ENCODE measurements at regions of chr15 and their contacts with region 1.

Region 1: DNA sequence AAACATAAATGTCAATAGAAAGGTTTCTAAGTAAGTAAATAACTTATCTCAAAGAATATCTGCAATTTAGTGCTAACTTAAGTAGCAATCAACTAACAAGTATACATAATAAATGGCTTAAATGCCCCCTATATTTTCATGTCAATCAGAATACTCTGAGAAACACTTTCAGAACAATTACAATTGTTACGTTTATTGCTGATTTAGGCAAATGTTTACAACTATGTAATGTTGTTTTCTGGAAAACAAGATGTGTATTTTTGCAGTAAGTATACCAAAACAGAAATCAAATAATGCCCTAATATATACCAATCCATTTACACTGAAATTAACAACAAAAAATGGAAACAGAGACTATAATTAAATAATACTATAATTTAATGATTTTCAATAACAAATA is 13.2 kb downstream of the TUBGCP5 start:
- DNase-seq: no peak
- ATAC-seq: no peak
- H3K4me3 ChIP-seq: no peak overlapping the region
- H3K27ac ChIP-seq: no peak overlapping the region
- H3K4me1 ChIP-seq: no peaks in the 10 kb centered on the region
- H3K27me3 ChIP-seq: no peaks in the 10 kb centered on the region
- CTCF ChIP-seq: no peak
- POLR2A ChIP-seq: no peak
- RAD21 ChIP-seq: no peak

Region 2: DNA sequence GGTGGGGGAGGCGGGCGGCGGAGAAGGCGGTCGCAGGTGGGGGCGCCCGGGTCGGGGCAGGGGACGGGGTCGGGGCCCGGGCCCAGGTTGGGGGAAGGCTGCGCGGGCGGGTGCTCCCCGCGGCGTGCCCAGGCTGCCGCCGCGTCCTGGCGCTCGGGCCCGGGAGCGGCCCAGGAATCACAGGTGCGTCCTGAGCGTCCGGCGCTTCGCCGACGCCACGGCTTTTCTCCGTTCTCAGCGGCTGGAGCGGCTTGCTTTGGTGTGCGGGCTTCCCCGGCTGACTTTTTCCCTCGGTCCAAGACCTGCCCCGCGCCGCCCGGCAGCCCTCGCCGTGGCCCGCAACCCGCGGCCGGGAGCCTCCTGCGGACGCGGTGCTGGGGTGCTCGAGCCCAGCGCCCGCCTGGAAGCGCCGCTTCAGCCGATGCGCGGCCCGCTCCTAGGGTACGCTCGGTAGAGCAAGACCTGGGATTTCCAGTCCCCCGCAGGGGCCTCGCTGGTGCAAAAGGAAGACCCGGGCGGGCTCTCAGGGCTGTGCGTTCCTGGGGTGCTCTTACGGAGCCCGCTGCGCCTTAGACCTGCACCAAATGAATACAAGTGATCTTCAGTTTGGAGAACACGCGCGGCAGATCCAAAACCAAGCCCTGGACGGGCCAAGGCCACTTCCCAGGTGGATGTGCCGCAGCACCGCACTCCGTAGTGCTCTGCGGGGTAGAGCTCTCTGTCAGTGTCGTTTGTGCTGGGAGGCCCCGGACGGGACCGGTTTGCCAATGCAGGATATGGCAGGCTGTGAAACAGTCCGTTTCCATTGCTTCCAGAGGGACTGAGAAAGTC is 239.1 kb before region 1 on chr15:
- CTCF ChIA-PET with region 1: no interaction called
- POLR2A ChIA-PET with region 1: no interaction called
- dilution Hi-C with region 1: no loop called
- in situ Hi-C with region 1: no loop called
- intact Hi-C with region 1: no loop called
- DNase-seq: no peak
- ATAC-seq: peak; percentile 38
- H3K4me3 ChIP-seq: peak overlapping the region; percentile 91
- H3K27ac ChIP-seq: peak overlapping the region; percentile 47; the same call in 1 of the 2 replicates
- H3K4me1 ChIP-seq: no peaks in the 10 kb centered on the region
- H3K27me3 ChIP-seq: no peaks in the 10 kb centered on the region
- CTCF ChIP-seq: no peak
- POLR2A ChIP-seq: no peak
- RAD21 ChIP-seq: no peak

Region 3: GRCh38 chr15:22918056-22918455 is 108.2 kb before region 1 on chr15:
- CTCF ChIA-PET with region 1: no interaction called
- POLR2A ChIA-PET with region 1: no interaction called
- dilution Hi-C with region 1: no loop called
- in situ Hi-C with region 1: no loop called
- intact Hi-C with region 1: loop called (anchors 5 kb)
- DNase-seq: peak; percentile 45
- ATAC-seq: peak; percentile 77
- H3K4me3 ChIP-seq: no peak overlapping the region
- H3K27ac ChIP-seq: no peak overlapping the region
- H3K4me1 ChIP-seq: no peaks in the 10 kb centered on the region
- H3K27me3 ChIP-seq: no peaks in the 10 kb centered on the region
- CTCF ChIP-seq: no peak
- POLR2A ChIP-seq: no peak
- RAD21 ChIP-seq: no peak

Measured in IMR-90 (cell line).